ENCODE measurements at regions of chr4 and their contacts with region 1.

Region 1: DNA sequence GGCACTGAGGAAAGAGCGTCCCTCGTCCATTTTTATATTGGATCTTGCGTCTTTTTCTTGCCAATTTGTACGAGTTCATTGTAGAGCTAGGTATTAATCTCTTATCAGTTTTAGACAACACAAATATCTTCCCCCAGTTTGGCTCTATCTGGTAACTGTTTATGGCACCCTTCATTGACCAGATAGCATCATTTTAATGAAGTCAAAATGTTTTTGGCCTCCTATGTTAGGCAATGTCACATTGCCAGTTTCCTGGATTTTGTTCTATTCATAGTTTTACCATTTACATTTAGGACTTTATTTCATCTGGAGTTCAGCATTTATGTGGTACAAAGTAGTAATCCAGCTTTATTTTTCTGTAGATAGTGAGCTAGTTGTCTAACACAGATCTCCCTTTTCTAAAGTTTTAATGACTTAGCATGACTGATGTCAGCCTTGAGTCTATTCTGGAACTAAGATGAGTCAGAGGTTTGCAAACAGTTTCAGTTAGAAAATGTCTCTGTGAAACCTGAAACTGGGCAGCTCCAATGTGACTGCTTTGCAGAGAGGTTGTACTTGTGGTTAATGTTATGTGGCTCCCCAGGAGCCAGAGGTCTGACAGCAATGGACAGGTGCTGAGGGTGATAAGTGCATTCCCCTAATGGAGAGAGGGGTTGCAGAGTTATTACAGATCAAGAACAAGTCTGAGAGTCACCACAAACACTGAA is 5.3 kb upstream of the STBD1 start:
- DNase-seq: peak; percentile 91
- ATAC-seq: peak; percentile 77
- H3K4me3 ChIP-seq: peak overlapping the region in 2 of 3 experiments; percentile 7 to 17; a peak in 1 of 6 replicates
- H3K27ac ChIP-seq: peak overlapping the region; percentile 59
- H3K4me1 ChIP-seq: peaks cover 40% of the 10 kb centered on the region
- H3K27me3 ChIP-seq: no peaks in the 10 kb centered on the region
- CTCF ChIP-seq: no peak
- EP300 ChIP-seq: peak in 1 of 2 experiments; percentile 66; a peak in 2 of 4 replicates
- POLR2A ChIP-seq: no peak
- RAD21 ChIP-seq: no peak

Region 2: GRCh38 chr4:76251441-76252270 is 49.6 kb before region 1 on chr4 and contains the start of gene FAM47E:
- CTCF ChIA-PET with region 1: no interaction called
- POLR2A ChIA-PET with region 1: interaction called, 4 read pairs
- in situ Hi-C with region 1: no loop called
- intact Hi-C with region 1: loop called (anchors 2 kb)
- DNase-seq: peak; percentile 57
- ATAC-seq: peak; percentile 99
- H3K4me3 ChIP-seq: peak within 1 kb of the TSS; percentile 39 to 69 (median 51)
- H3K27ac ChIP-seq: no peak within 1 kb of the TSS
- H3K4me1 ChIP-seq: peaks cover 13% of the 10 kb centered on the region
- H3K27me3 ChIP-seq: no peaks in the 10 kb centered on the region; a peak in 1 of 5 replicates
- CTCF ChIP-seq: peak; percentile 85
- EP300 ChIP-seq: no peak; a peak in 1 of 4 replicates
- POLR2A ChIP-seq: no peak
- RAD21 ChIP-seq: peak; percentile 96
- total RNA-seq, gene FAM47E: 0.29 and 0.33 TPM in 2 replicates

Region 3: GRCh38 chr4:76275486-76276124 is 25.6 kb before region 1 on chr4:
- CTCF ChIA-PET with region 1: no interaction called
- POLR2A ChIA-PET with region 1: interaction called, 22 read pairs
- in situ Hi-C with region 1: no loop called
- intact Hi-C with region 1: loop called (anchors 2 kb)
- DNase-seq: peak; percentile 76
- ATAC-seq: peak; percentile 84
- H3K4me3 ChIP-seq: no peak overlapping the region
- H3K27ac ChIP-seq: no peak overlapping the region
- H3K4me1 ChIP-seq: peaks cover 80% of the 10 kb centered on the region
- H3K27me3 ChIP-seq: no peaks in the 10 kb centered on the region
- CTCF ChIP-seq: no peak
- EP300 ChIP-seq: peak in 1 of 2 experiments; percentile 70; a peak in 1 of 4 replicates
- POLR2A ChIP-seq: no peak
- RAD21 ChIP-seq: no peak

Region 4: DNA sequence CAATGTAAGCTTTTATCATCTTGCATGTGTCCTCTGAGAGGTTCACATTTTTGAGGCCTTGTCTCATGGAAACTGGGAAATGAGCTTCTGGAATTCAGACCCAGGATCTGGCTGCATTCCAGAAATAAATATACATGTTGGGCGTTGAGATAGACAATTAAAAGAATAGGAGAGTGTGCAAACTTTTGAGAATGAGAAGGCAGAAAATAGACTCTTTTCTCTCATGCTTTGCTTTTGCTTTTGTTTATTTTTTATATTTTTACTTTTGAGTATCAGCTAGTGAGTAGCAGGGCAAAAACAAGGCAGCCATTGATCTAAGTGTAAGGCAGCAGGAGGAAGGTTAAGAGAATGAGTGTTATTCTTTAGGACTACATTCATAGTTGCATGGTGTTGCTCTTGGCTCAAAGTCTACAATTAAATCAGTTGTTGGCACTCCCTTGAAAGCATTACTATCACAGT is 146.2 kb after region 1 on chr4:
- CTCF ChIA-PET with region 1: no interaction called
- POLR2A ChIA-PET with region 1: no interaction called
- in situ Hi-C with region 1: no loop called
- intact Hi-C with region 1: no loop called
- DNase-seq: no peak
- ATAC-seq: no peak
- H3K4me3 ChIP-seq: no peak overlapping the region
- H3K27ac ChIP-seq: no peak overlapping the region
- H3K4me1 ChIP-seq: no peaks in the 10 kb centered on the region; the same call in 1 of the 2 replicates
- H3K27me3 ChIP-seq: 0 out of 5 replicates have a peak, but pooled peaks cover 0 to 3% of the 10 kb centered on the region in 2 experiments
- CTCF ChIP-seq: no peak
- EP300 ChIP-seq: no peak
- POLR2A ChIP-seq: no peak
- RAD21 ChIP-seq: no peak